SK-N-SH (cell line): ENCODE measurements at regions of chr16 and their contacts with region 1.

Region 1: GRCh38 chr16:72832621-72833248 is 215.2 kb downstream of the ZFHX3 start:
- DNase-seq: peak; percentile 84
- H3K4me3 ChIP-seq: peak overlapping the region in 1 of 2 experiments; percentile 43; a peak in 1 of 4 replicates
- H3K27ac ChIP-seq: peak overlapping the region; percentile 34 to 75; a peak in 3 of 4 replicates
- H3K4me1 ChIP-seq: peaks cover 3 to 13% of the 10 kb centered on the region in 2 experiments; a peak in 3 of 4 replicates
- H3K27me3 ChIP-seq: no peaks in the 10 kb centered on the region
- CTCF ChIP-seq: peak; percentile 99
- EP300 ChIP-seq: 0 out of 4 replicates have a peak, but pooled peaks of 1 of the 2 experiments have one; percentile 13
- RAD21 ChIP-seq: peak; percentile 96

Region 2: DNA sequence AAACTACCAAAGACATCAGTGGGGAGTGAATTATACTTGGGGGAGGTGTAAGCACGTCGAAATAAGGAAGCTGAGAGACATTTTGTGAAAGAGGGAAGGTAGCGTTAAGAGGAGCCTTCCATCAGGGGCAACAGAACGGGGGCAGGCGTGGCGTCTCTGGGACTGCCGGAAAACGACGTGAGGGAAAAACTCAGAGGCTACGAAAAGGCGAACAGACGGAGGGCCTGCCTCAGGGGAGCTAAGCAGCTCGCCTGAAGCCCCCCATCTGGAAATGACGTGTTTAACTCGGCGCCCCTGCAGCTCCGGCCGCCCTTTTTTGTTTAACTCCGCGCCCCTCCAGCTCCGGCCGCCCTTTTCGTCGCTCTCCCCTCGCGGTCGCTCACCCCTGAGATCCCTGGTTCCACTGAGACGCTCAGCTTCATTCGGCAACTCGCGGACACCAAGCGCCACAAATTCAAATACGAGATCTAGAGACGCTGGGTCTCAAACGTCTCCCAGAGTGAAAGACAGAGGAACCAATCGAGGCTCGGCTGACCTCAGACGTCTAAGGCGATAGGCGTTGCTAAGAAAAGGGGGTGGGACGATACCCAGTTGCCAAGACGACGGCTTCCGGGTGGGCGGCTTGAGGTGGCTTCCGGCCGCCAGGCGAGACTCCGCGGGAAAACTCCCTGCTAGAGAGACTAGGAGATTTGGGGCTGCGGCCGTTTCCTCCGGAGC is 168.1 kb before region 1 on chr16:
- CTCF ChIA-PET with region 1: interaction called, 13 read pairs
- POLR2A ChIA-PET with region 1: no interaction called
- DNase-seq: peak; percentile 93
- H3K4me3 ChIP-seq: peak overlapping the region; percentile 79 to 94
- H3K27ac ChIP-seq: peak overlapping the region; percentile 81 to 82
- H3K4me1 ChIP-seq: peaks cover 0 to 4% of the 10 kb centered on the region in 2 experiments; a peak in 1 of 4 replicates
- H3K27me3 ChIP-seq: no peaks in the 10 kb centered on the region
- CTCF ChIP-seq: no peak
- EP300 ChIP-seq: no peak
- RAD21 ChIP-seq: 0 out of 2 replicates have a peak, but pooled peaks have one; percentile 1

Region 3: GRCh38 chr16:72856797-72857196 is 24.1 kb after region 1 on chr16:
- CTCF ChIA-PET with region 1: interaction called, 16 read pairs
- POLR2A ChIA-PET with region 1: no interaction called
- DNase-seq: peak; percentile 54
- H3K4me3 ChIP-seq: no peak overlapping the region
- H3K27ac ChIP-seq: no peak overlapping the region
- H3K4me1 ChIP-seq: peaks cover 0 to 28% of the 10 kb centered on the region in 2 experiments; a peak in 2 of 4 replicates
- H3K27me3 ChIP-seq: no peaks in the 10 kb centered on the region
- CTCF ChIP-seq: peak; percentile 48
- EP300 ChIP-seq: no peak
- RAD21 ChIP-seq: peak; percentile 24; the same call in 1 of the 2 replicates

Region 4: GRCh38 chr16:72961121-72961763 is 128.5 kb after region 1 on chr16:
- CTCF ChIA-PET with region 1: interaction called, 20 read pairs
- POLR2A ChIA-PET with region 1: interaction called, 4 read pairs
- DNase-seq: peak; percentile 83
- H3K4me3 ChIP-seq: peak overlapping the region in 1 of 2 experiments; percentile 7; a peak in 1 of 4 replicates
- H3K27ac ChIP-seq: peak overlapping the region in 1 of 2 experiments; percentile 78; a peak in 2 of 4 replicates
- H3K4me1 ChIP-seq: peaks cover 8 to 38% of the 10 kb centered on the region in 2 experiments
- H3K27me3 ChIP-seq: no peaks in the 10 kb centered on the region
- CTCF ChIP-seq: peak; percentile 55
- EP300 ChIP-seq: peak in 1 of 2 experiments; percentile 24; a peak in 1 of 4 replicates
- RAD21 ChIP-seq: peak; percentile 63

Region 5: DNA sequence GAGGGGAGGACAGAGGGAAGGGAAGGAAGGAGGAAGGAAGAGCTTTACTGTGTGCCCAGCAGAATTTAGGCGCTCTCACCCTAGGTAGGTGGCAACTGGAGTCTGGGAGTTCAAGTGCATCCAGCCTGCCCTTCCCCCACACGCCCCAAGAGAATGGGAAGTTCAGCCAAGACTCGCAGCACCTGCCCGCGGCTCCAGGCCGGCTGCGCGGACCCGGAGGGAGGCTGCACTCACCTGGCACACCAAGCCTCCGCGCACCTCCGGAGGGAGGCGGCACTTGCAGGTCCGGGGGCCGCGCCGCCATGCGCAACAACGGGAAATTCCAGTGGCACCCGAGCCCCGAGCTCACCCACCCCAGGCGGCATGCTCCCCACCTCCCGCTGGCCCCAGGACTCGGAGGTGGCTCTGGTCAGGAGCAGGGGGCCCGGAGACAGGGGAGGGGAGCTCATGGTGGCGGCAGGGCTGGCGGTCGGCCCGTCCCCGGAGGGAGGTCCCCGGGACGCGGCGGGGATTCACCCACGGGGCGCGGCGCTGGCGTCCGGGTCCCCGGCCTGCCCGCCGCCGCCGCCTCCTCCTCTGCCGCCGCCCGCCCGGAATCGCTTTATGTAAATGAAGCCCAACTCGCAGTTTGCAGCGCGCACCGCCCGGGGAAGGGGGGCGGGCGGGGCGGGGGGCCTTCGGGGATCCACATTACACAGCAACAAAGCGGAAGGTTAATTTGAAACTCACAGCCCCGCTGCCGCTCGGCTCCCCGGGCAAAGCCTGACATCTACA is 215.0 kb after region 1 on chr16 and contains the start of gene ZFHX3:
- CTCF ChIA-PET with region 1: interaction called, 12 read pairs
- POLR2A ChIA-PET with region 1: no interaction called
- DNase-seq: peak; percentile 82
- H3K4me3 ChIP-seq: peak within 1 kb of the TSS; percentile 68
- H3K27ac ChIP-seq: peak within 1 kb of the TSS; percentile 66 to 90
- H3K4me1 ChIP-seq: peaks cover 66 to 73% of the 10 kb centered on the region in 2 experiments
- H3K27me3 ChIP-seq: no peaks in the 10 kb centered on the region
- CTCF ChIP-seq: no peak
- EP300 ChIP-seq: no peak
- RAD21 ChIP-seq: peak; percentile 47
- polyA plus RNA-seq, gene ZFHX3: 1.9 and 2.0 TPM in 2 replicates

Region 6: GRCh38 chr16:73878611-73879010 is 1045.9 kb after region 1 on chr16:
- CTCF ChIA-PET with region 1: interaction called, 12 read pairs
- POLR2A ChIA-PET with region 1: no interaction called
- DNase-seq: peak; percentile 46
- H3K4me3 ChIP-seq: no peak overlapping the region; a peak in 1 of 4 replicates
- H3K27ac ChIP-seq: no peak overlapping the region
- H3K4me1 ChIP-seq: peaks cover 0 to 3% of the 10 kb centered on the region in 2 experiments; a peak in 2 of 4 replicates
- H3K27me3 ChIP-seq: no peaks in the 10 kb centered on the region
- CTCF ChIP-seq: peak; percentile 66
- EP300 ChIP-seq: no peak
- RAD21 ChIP-seq: peak; percentile 94